H1 (cell line): ENCODE measurements at regions of chr1 and their contacts with region 1.

Region 1: GRCh38 chr1:30718636-30719405 is 4.6 kb downstream of the MATN1 start:
- DNase-seq: peak in 1 of 2 experiments; percentile 97
- H3K4me3 ChIP-seq: peak overlapping the region; percentile 35 to 67 (median 56)
- H3K27ac ChIP-seq: no peak overlapping the region
- H3K4me1 ChIP-seq: peaks cover 0 to 4% (median 1%) of the 10 kb centered on the region in 4 experiments; a peak in 4 of 7 replicates
- H3K27me3 ChIP-seq: no peaks in the 10 kb centered on the region; a peak in 1 of 7 replicates
- CTCF ChIP-seq: peak in 1 of 3 experiments; percentile 89; a peak in 1 of 4 replicates
- EP300 ChIP-seq: no peak
- POLR2A ChIP-seq: no peak
- RAD21 ChIP-seq: peak; percentile 98 to 99; a peak in 2 of 4 replicates

Region 2: GRCh38 chr1:30732277-30732996 is 13.6 kb after region 1 on chr1:
- CTCF ChIA-PET with region 1: interaction called, 57 read pairs
- POLR2A ChIA-PET with region 1: interaction called, 5 read pairs
- DNase-seq: no peak
- H3K4me3 ChIP-seq: no peak overlapping the region
- H3K27ac ChIP-seq: no peak overlapping the region
- H3K4me1 ChIP-seq: peaks cover 0 to 7% (median 2%) of the 10 kb centered on the region in 4 experiments; a peak in 4 of 7 replicates
- H3K27me3 ChIP-seq: no peaks in the 10 kb centered on the region
- CTCF ChIP-seq: no peak
- EP300 ChIP-seq: no peak
- POLR2A ChIP-seq: no peak
- RAD21 ChIP-seq: no peak

Region 3: DNA sequence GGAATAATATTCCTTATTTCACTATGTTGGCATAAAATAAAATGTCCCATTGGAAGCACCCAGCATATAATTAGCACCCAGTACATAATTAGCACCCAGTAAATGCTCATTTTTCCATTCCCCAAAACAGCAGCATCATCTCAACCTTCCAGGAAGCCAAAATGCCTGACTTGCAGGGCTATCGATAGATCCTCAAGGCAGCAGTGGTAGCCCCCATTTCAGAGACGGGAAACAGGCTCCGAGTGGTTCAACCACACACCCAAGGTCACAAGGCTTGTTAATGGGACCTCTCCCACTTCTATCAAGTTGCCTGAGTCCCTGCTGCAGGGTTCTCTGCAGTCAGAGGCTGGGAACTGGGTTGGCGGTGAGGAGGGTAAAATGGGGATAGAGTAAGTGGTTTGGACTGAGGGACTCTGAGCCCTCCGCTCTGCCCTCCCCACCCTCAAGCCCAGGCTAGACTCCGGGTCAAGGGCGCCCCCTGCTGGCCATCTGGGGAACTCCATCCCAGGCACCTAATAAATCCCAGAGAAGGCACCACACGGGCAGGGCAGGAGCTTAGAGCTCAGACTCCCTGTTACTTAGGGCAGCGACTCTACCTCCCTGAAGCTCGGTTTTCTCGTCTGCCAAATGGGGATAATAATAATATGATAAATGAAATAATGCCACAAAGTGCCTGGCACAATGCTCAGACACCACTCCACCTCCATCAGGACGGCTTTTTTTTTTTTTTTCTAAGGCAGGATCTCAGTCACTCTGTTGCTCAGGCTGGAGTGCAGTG is 60.7 kb after region 1 on chr1:
- CTCF ChIA-PET with region 1: interaction called, 1,640 read pairs
- POLR2A ChIA-PET with region 1: interaction called, 6 read pairs
- DNase-seq: peak; percentile 70 to 100
- H3K4me3 ChIP-seq: no peak overlapping the region
- H3K27ac ChIP-seq: no peak overlapping the region
- H3K4me1 ChIP-seq: peaks cover 0 to 4% (median 2%) of the 10 kb centered on the region in 4 experiments; a peak in 4 of 7 replicates
- H3K27me3 ChIP-seq: no peaks in the 10 kb centered on the region
- CTCF ChIP-seq: peak; percentile 94 to 96 (median 95)
- EP300 ChIP-seq: no peak
- POLR2A ChIP-seq: no peak
- RAD21 ChIP-seq: peak; percentile 97 to 99

Region 4: GRCh38 chr1:30847358-30847972 is 128.6 kb after region 1 on chr1:
- CTCF ChIA-PET with region 1: interaction called, 10 read pairs
- POLR2A ChIA-PET with region 1: no interaction called
- DNase-seq: peak in 1 of 2 experiments; percentile 72
- H3K4me3 ChIP-seq: no peak overlapping the region
- H3K27ac ChIP-seq: no peak overlapping the region; the same call in 1 of the 2 replicates
- H3K4me1 ChIP-seq: peaks cover 0 to 20% (median 15%) of the 10 kb centered on the region in 4 experiments; a peak in 6 of 7 replicates
- H3K27me3 ChIP-seq: no peaks in the 10 kb centered on the region
- CTCF ChIP-seq: no peak
- EP300 ChIP-seq: no peak
- POLR2A ChIP-seq: no peak
- RAD21 ChIP-seq: no peak

Region 5: DNA sequence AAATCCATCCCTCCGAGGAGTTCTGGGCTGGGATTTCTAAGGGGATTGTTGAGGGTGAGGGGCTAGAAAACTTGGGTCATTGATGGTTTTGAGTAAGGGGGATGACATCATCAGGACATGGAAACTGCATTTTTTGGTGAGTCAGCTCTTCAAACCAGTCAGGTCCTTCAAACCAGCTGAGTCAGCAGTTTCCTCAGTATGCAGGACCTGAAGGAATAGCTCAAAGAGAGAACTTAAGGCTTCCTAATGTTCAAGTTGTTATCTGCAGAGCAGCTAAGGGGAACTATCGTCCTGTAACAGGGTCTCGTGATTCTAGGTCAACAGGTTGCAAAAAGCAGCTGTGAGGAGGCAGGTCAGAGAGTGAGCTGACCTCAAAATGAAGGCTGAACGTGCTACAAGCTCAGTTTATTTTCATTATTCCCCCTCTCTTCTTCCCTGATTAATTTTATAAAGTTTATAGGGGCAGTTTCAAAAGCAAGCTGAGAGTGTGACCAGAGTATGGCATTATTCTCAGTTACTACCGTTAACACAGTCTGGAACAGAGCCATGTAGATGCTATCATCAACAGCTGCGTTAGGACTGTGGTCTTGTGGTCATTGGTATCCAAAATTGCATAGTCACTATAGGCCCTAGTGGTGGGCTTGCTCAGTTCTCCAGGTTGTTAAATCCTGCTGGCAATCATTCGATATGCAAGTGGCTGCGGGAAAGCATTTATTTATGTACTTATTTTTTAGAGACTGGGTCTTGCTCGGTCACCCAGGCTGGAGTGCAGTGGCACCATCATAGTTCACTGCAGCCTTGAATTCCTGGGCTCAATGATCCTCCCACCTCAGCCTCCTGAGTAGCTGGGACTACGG is 200.4 kb after region 1 on chr1:
- CTCF ChIA-PET with region 1: interaction called, 25 read pairs
- POLR2A ChIA-PET with region 1: no interaction called
- DNase-seq: peak in 1 of 2 experiments; percentile 38
- H3K4me3 ChIP-seq: no peak overlapping the region
- H3K27ac ChIP-seq: no peak overlapping the region
- H3K4me1 ChIP-seq: no peaks in the 10 kb centered on the region
- H3K27me3 ChIP-seq: no peaks in the 10 kb centered on the region
- CTCF ChIP-seq: no peak; a peak in 1 of 4 replicates
- EP300 ChIP-seq: no peak
- POLR2A ChIP-seq: no peak
- RAD21 ChIP-seq: no peak